Adrenal gland (tissue), 19 donors: ENCODE measurements at regions of chr5 and their contacts with region 1.

Region 1: GRCh38 chr5:134527146-134527960 is 1.9 kb downstream of the JADE2 start:
- DNase-seq: peak; percentile 84 to 91 (median 87)
- H3K4me3 ChIP-seq: peak overlapping the region; percentile 76 to 91 (median 88)
- H3K27ac ChIP-seq: peak overlapping the region; percentile 91 to 99 (median 98)
- H3K4me1 ChIP-seq: peaks cover 37 to 57% of the 10 kb centered on the region in 2 donors
- H3K27me3 ChIP-seq: no peaks in the 10 kb centered on the region
- CTCF ChIP-seq: peak; percentile 72 to 97 (median 91)
- POLR2A ChIP-seq: peak; percentile 31 to 50

Region 2: DNA sequence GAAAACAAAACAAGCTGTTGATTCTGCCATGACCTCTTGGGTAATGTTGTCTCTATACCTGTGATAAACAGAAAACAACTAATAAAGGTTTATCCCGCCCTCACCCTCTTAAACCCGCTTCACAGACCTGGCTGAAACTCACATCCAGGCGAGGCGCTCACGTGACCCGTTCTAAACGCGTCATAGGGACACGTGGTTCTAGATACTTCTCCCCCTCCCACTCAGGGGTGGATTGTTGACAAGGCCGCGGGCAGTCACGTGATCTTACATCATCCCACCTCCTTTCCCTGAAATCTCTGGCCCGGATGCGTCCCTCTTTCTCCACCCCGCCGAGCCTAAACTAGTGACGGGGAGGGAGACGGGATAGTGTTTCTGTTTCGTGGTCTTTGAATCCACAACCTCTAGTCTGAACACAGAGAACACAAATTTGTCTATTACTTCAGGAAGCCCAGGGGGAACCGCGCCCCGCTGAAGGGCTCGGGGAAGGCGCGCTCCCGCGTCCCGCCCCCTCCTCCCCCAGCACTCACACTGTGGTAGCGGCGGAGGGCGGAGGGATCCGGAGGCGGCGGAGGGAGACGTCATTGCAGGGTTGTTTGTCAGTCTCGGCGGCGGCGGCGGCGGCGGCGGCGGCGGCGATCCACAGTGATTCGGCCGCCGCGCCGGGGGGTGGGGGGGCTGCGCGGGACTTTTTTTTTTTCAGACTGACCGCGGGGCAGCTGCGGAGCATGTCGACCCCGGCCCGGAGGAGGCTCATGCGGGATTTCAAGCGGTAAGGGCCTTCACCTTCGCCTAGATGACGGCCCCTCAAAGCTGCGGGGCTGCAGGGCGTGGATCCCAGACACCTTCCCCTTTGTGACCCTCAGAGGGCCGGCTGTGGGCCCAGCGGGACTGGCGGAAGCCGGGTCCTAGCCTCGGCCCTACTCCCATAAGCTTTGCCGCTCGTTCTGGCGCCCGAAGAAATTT is 156.2 kb before region 1 on chr5 and contains the start of gene UBE2B:
- intact Hi-C with region 1: loop called in 1 of 2 experiments (anchors 5 kb)
- DNase-seq: peak; percentile 98 to 100 (median 99)
- H3K4me3 ChIP-seq: peak within 1 kb of the TSS; percentile 62 to 95 (median 69)
- H3K27ac ChIP-seq: peak within 1 kb of the TSS; percentile 91 to 99 (median 98)
- H3K4me1 ChIP-seq: peaks cover 12 to 43% of the 10 kb centered on the region in 2 donors
- H3K27me3 ChIP-seq: no peaks in the 10 kb centered on the region
- CTCF ChIP-seq: peak in 1 of 6 experiments; percentile 13
- POLR2A ChIP-seq: peak; percentile 53 to 81
- total RNA-seq, gene UBE2B: 19.7 to 144 (median 58.2) TPM

Region 3: GRCh38 chr5:134411546-134412266 is 115.6 kb before region 1 on chr5 and contains the start of gene CDKN2AIPNL:
- intact Hi-C with region 1: loop called (anchors 5 to 10 kb)
- DNase-seq: peak; percentile 89 to 93 (median 90)
- H3K4me3 ChIP-seq: peak within 1 kb of the TSS; percentile 16 to 90 (median 65)
- H3K27ac ChIP-seq: peak within 1 kb of the TSS; percentile 7 to 86 (median 66)
- H3K4me1 ChIP-seq: peaks cover 13 to 16% of the 10 kb centered on the region in 2 donors
- H3K27me3 ChIP-seq: no peaks in the 10 kb centered on the region
- CTCF ChIP-seq: peak; percentile 53 to 93 (median 72)
- POLR2A ChIP-seq: peak; percentile 38 to 48
- total RNA-seq, gene CDKN2AIPNL: 14.1 to 34.3 (median 29.0) TPM

Region 4: GRCh38 chr5:134436523-134437339 is 90.6 kb before region 1 on chr5:
- intact Hi-C with region 1: no loop called
- DNase-seq: peak; percentile 39 to 89 (median 51)
- H3K4me3 ChIP-seq: no peak overlapping the region
- H3K27ac ChIP-seq: peak overlapping the region in 2 of 5 donors; percentile 80 to 82
- H3K4me1 ChIP-seq: peaks cover 15 to 33% of the 10 kb centered on the region in 2 donors
- H3K27me3 ChIP-seq: no peaks in the 10 kb centered on the region
- CTCF ChIP-seq: no peak
- POLR2A ChIP-seq: no peak

Region 5: DNA sequence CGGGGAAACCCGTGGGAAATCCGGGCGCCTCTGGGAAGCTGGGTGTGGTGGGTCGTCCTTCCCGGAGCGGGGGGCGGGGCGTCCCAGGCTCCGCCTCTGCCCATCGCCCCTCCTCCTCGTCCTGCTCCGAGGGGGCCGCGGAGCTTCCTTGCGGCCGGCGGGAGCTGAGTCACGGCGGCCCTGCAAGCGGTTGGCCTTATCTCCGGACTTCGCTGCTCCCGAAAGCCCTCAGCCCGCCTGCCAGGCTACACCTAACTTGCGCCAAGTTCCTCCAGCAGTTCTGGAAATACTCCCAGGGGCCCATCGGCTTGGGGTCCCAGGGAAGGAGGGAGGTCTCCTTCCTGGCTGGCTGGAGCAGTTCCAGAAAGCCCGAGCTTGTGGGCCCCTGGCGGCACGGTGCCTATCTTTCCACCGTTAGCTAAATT is 61.5 kb before region 1 on chr5:
- intact Hi-C with region 1: loop called (anchors 5 to 10 kb)
- DNase-seq: peak; percentile 90 to 95 (median 91)
- H3K4me3 ChIP-seq: peak overlapping the region in 2 of 4 donors; percentile 26 to 53
- H3K27ac ChIP-seq: peak overlapping the region; percentile 94 to 99 (median 97)
- H3K4me1 ChIP-seq: peaks cover 16 to 37% of the 10 kb centered on the region in 2 donors
- H3K27me3 ChIP-seq: no peaks in the 10 kb centered on the region
- CTCF ChIP-seq: peak in 1 of 6 experiments; percentile 3
- POLR2A ChIP-seq: peak; percentile 59 to 73

Region 6: GRCh38 chr5:134568761-134569695 is 41.7 kb after region 1 on chr5:
- intact Hi-C with region 1: loop called in 1 of 2 experiments (anchors 5 kb)
- DNase-seq: peak; percentile 94 to 99 (median 98)
- H3K4me3 ChIP-seq: peak overlapping the region in 1 of 4 donors; percentile 31
- H3K27ac ChIP-seq: peak overlapping the region; percentile 75 to 93 (median 82)
- H3K4me1 ChIP-seq: peaks cover 35 to 51% of the 10 kb centered on the region in 2 donors
- H3K27me3 ChIP-seq: no peaks in the 10 kb centered on the region
- CTCF ChIP-seq: no peak
- POLR2A ChIP-seq: no peak